ENCODE measurements at regions of chr21 and their contacts with region 1.

Region 1: DNA sequence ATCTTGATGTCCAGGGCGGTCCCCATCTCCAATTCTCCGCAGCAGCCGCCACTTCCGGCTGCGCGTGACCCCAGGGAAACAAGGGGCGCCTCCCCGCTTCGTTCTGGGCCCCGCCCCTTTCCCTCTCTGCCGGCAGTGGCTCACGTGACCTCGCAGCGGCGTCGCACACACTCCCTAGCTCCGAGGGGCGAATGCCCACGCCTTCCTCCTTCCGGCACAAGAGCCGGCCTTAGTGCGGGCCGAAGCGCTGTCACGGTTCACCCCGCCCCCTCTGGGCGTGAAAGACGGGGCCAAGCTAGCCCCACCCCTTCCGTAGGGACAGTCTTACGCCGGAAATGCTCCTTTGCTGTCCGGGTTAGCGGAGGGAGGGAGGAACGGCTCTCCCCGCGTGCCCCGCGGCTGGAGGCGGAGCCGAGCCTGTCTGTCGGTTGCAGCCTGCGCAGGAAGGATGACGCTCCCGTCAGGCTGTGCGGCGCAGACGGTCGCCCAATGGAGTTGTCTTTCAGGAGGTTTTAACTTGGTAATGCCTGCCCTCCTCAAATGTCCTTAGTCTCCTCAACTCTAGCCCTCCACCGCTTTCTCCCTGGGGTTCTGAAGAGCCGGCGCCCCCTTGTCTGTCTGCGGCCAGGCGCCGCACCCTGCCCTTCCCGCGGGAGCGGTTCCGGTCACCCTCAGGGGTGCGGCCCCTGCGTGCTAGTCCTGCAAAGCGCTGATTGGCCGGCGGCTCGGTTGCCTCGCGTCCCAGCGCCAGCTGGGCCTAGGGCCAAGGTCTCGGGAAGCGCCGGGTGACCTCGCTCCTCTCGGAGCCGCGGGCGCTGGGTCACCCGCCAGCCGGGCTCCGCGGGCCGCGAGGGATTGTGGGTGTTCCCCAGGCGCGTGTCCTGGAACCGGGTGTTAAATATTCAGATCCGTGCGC is at the start of gene VPS26C:
- DNase-seq: peak; percentile 98
- ATAC-seq: peak; percentile 94 to 98 (median 96)
- H3K4me3 ChIP-seq: peak within 1 kb of the TSS; percentile 59 to 93 (median 89)
- H3K27ac ChIP-seq: peak within 1 kb of the TSS; percentile 95 to 99 (median 97)
- H3K4me1 ChIP-seq: peaks cover 5 to 46% (median 35%) of the 10 kb centered on the region in 9 donors
- H3K27me3 ChIP-seq: no peaks in the 10 kb centered on the region
- CTCF ChIP-seq: no peak
- total RNA-seq, gene VPS26C: 37.6 to 57.5 (median 47.0) TPM

Region 2: DNA sequence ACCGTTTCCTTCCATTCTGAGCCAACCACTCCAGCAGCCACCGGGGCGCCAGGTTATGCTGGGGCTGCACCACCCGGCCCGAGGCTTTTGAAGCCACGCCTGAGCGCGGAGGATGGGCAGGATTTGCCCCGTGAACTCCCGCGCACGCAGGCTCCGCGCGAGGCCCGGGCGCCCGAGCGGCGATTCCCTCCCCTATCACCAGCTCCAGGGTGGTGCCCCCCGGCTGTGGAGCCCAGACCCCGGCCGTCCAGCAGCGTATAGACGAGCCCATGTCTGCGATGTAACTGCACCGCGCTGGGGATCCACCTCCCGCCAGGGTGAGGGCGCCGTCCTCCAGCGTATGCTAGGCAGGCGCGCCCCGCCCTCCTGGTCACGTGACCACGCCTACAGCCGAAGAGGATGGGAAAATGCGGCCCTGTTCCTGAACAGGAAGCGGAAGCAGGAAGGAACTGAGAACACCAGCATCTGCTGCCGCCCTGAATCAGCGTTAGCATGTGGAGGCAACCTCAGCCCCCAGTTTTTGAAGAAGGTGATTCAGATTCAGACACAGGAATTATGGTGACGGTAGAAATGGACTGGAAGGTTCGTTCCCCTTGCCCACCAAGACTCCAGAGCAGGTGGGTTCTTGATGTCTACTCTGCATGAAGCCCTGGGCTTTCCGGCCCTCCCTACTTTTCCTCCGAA is 46.4 kb before region 1 on chr21:
- intact Hi-C with region 1: loop called in 4 of 10 experiments (anchors 1 to 5 kb)
- DNase-seq: peak; percentile 95
- ATAC-seq: peak; percentile 95 to 98 (median 98)
- H3K4me3 ChIP-seq: peak overlapping the region; percentile 47 to 76 (median 64)
- H3K27ac ChIP-seq: peak overlapping the region; percentile 76 to 91 (median 85)
- H3K4me1 ChIP-seq: peaks cover 0 to 16% (median 9%) of the 10 kb centered on the region in 9 donors
- H3K27me3 ChIP-seq: no peaks in the 10 kb centered on the region
- CTCF ChIP-seq: peak in 7 of 9 donors; percentile 42 to 75 (median 66)

Region 3: DNA sequence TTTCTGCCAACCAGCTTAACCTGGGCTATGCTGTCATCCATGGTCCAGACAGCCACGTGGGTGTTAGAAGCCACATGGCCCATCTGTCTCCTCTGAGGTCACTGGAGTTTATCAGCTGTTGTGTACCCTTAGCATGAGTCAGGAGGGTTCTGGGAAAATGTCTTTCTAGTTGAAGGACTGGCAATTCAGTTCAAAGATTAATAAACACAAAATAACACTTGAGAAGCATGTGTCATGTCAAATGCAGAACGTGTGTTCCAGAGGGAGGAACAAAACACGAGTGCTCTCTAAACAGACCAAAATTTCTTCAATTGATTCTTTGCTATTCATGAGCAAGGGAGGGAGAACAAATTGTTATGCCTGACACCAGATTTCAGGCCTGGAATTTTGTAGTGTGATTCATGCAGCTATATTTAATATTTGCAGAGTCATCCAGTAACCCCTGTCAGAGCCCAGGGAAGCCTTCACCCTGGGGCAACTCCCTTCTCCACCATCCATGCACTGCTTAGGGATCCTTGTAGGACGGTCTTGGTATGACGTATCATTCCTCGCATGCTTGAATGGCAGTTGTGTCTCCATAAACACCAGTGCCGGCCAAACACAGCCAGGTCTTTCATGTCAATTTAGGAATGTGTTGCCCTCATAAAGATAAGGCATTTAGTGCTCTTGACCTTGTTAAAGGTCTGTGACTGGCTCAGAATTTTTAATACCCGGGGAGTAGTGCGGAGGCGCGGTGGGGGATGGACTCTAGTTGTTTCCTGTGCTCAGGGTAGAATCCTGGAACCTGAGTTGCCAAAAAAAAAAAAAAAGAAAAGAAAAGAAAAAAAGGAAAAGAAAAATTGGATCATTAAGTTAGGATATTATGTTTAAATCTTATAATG is 71.4 kb after region 1 on chr21:
- intact Hi-C with region 1: loop called in 5 of 10 experiments (anchors 5 to 10 kb)
- DNase-seq: peak; percentile 37 to 69
- ATAC-seq: peak; percentile 88 to 98 (median 96)
- H3K4me3 ChIP-seq: peak overlapping the region in 1 of 10 donors; percentile 2
- H3K27ac ChIP-seq: peak overlapping the region; percentile 74 to 88 (median 81)
- H3K4me1 ChIP-seq: peaks cover 0 to 29% (median 16%) of the 10 kb centered on the region in 9 donors
- H3K27me3 ChIP-seq: no peaks in the 10 kb centered on the region
- CTCF ChIP-seq: no peak

Region 4: GRCh38 chr21:37452227-37452626 is 184.7 kb after region 1 on chr21:
- intact Hi-C with region 1: loop called in 1 of 10 experiments (anchors 10 kb)
- DNase-seq: peak; percentile 24 to 65
- ATAC-seq: peak; percentile 68 to 93 (median 85)
- H3K4me3 ChIP-seq: no peak overlapping the region
- H3K27ac ChIP-seq: peak overlapping the region in 9 of 10 donors; percentile 14 to 75 (median 56)
- H3K4me1 ChIP-seq: peaks cover 15 to 100% (median 86%) of the 10 kb centered on the region in 9 donors
- H3K27me3 ChIP-seq: no peaks in the 10 kb centered on the region
- CTCF ChIP-seq: no peak

Region 5: DNA sequence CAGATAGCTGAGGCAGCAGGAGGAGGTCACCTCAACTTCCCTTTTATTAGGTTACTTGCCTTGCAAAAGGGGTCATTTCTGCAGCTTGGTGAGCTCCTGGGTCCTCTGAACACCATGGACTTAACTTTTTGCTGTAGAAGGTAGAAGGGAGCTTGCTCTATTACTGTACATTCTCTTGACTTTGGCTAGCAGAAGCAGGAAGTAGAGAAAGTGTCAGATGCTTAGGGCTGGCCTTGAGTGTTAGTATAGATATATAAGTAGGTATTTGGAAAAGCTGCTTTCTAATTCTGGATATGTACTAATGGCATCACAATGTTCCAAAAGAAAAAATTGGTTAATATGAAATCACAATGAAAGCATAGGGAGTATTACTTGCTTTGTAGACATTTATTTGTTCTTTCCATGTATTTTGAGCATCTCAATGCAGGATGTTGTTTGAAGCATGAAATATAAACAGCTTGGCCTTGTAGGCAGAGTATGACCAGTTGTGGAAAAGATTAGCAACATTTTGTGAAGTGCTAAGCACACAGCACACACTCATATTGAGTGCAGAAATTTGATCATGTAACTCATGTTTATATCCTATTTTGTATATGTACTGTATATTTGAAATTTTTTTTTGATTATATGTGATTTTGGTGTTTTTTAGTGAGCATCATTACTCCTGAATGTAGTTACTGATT is 207.8 kb after region 1 on chr21:
- intact Hi-C with region 1: loop called in 1 of 10 experiments (anchors 10 kb)
- DNase-seq: no peak
- ATAC-seq: peak in 2 of 8 donors; percentile 44 to 47
- H3K4me3 ChIP-seq: no peak overlapping the region
- H3K27ac ChIP-seq: peak overlapping the region in 1 of 10 donors; percentile 25
- H3K4me1 ChIP-seq: peaks cover 7 to 81% (median 54%) of the 10 kb centered on the region in 9 donors
- H3K27me3 ChIP-seq: no peaks in the 10 kb centered on the region
- CTCF ChIP-seq: no peak

Region 6: GRCh38 chr21:37582590-37582989 is 315.1 kb after region 1 on chr21:
- intact Hi-C with region 1: loop called in 1 of 10 experiments (anchors 10 kb)
- DNase-seq: peak in 1 of 2 donors; percentile 39
- ATAC-seq: peak in 7 of 8 donors; percentile 51 to 81 (median 77)
- H3K4me3 ChIP-seq: no peak overlapping the region
- H3K27ac ChIP-seq: no peak overlapping the region
- H3K4me1 ChIP-seq: peaks cover 0 to 13% (median 0%) of the 10 kb centered on the region in 9 donors
- H3K27me3 ChIP-seq: no peaks in the 10 kb centered on the region
- CTCF ChIP-seq: peak; percentile 39 to 75 (median 66)

Region 7: DNA sequence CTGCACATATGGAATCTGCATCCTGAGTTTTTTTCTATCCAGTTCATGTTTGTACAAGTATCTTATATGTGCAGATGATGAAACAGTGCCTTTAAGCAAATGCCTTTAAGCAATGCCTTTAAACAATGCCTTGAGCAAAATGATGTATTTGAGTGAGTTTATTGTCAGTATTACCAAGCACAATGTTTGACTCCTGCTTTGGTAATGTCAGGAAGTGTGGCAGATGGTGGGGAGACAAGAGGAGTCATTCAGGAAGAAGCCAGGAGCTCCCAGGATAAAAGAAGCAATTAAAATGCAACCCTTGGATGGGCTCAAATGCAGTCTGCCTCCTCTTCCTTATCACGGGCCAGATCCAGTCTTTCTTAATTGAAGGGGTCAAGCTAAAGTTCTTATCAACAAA is 880.5 kb after region 1 on chr21:
- intact Hi-C with region 1: no loop called
- DNase-seq: no peak
- ATAC-seq: no peak
- H3K4me3 ChIP-seq: no peak overlapping the region
- H3K27ac ChIP-seq: no peak overlapping the region
- H3K4me1 ChIP-seq: no peaks in the 10 kb centered on the region
- H3K27me3 ChIP-seq: peaks cover 0 to 21% (median 8%) of the 10 kb centered on the region in 7 donors
- CTCF ChIP-seq: no peak

Measured in heart right ventricle (tissue), 16 donors.